ENCODE measurements at regions of chr3 and their contacts with region 1.

Region 1: GRCh38 chr3:44198284-44199269 is 43.1 kb upstream of the TOPAZ1 start:
- DNase-seq: peak; percentile 29
- ATAC-seq: peak; percentile 71
- H3K4me3 Mint-ChIP-seq: no peak overlapping the region
- H3K27ac Mint-ChIP-seq: no peak overlapping the region
- H3K4me1 Mint-ChIP-seq: no peaks in the 10 kb centered on the region
- H3K27me3 Mint-ChIP-seq: peaks cover 10% of the 10 kb centered on the region
- CTCF ChIP-seq: peak; percentile 67

Region 2: DNA sequence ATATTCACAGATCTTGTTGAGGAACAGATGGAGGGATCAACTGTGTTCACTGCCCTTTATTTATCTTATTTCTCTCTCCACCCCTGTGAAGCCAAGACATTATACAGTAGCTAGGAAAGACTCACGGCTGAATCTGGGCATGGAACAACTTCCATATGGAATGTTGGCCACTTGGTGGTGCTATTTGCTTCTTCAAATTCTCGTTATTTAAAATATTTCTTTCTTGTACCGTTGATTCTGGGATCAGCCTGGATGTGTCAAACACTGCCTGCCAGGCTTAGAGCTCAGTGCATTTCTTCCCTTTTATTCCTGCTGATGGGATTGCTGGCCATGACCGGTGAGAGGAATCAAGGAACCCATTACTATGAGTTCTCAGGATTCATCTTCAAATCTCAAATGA is 1236.9 kb before region 1 on chr3:
- CTCF ChIA-PET with region 1: interaction called, 5 read pairs
- POLR2A ChIA-PET with region 1: no interaction called
- intact Hi-C with region 1: loop called (anchors 5 kb)
- DNase-seq: no peak
- ATAC-seq: no peak
- H3K4me3 Mint-ChIP-seq: no peak overlapping the region
- H3K27ac Mint-ChIP-seq: no peak overlapping the region
- H3K4me1 Mint-ChIP-seq: no peaks in the 10 kb centered on the region
- H3K27me3 Mint-ChIP-seq: peaks cover 15% of the 10 kb centered on the region
- CTCF ChIP-seq: no peak

Region 3: GRCh38 chr3:43540624-43541023 is 658.0 kb before region 1 on chr3:
- CTCF ChIA-PET with region 1: interaction called, 8 read pairs
- POLR2A ChIA-PET with region 1: no interaction called
- intact Hi-C with region 1: loop called (anchors 1 kb)
- DNase-seq: no peak
- ATAC-seq: no peak
- H3K4me3 Mint-ChIP-seq: no peak overlapping the region
- H3K27ac Mint-ChIP-seq: no peak overlapping the region
- H3K4me1 Mint-ChIP-seq: no peaks in the 10 kb centered on the region
- H3K27me3 Mint-ChIP-seq: no peaks in the 10 kb centered on the region
- CTCF ChIP-seq: no peak

Region 4: DNA sequence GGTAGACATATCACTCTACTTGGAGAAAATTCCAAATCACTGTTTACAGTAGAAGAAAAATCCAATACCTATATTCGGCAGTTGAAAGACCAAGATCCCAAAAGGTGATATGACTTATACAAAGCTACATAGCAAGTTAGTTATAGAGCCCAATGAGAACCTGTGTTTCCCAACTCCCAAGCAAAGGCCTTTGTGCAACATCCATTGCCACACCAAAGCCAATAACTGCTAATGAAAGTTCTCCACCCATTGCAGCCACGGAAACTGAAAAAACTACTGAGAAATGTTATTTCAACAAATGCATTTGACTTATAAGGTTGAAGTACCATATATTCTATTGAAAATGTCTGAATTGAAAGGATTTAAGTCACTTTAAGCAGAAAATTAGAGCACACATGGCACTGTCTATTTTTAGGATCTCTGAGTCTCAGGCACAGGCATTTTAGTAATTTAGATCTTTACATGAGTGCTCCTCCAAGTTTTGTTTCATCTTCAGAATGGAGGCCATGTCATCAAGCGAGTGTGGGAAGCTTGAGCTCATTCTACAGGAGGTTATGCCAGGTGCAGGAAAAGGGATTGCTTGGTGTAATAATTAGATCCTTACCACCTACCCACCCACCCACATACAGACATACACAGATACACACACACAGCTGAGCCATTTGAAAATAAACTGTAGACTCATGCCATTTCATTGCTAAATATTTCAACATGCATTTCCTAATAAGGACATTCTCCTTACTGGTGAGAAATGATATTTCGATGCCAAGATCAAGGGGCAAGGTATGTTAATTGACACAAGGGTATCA is 557.1 kb before region 1 on chr3:
- CTCF ChIA-PET with region 1: no interaction called
- POLR2A ChIA-PET with region 1: no interaction called
- intact Hi-C with region 1: no loop called
- DNase-seq: no peak
- ATAC-seq: no peak
- H3K4me3 Mint-ChIP-seq: no peak overlapping the region
- H3K27ac Mint-ChIP-seq: no peak overlapping the region
- H3K4me1 Mint-ChIP-seq: no peaks in the 10 kb centered on the region
- H3K27me3 Mint-ChIP-seq: peaks cover 17% of the 10 kb centered on the region
- CTCF ChIP-seq: no peak

Region 5: GRCh38 chr3:43769471-43770425 is 428.8 kb before region 1 on chr3:
- CTCF ChIA-PET with region 1: interaction called, 25 read pairs
- POLR2A ChIA-PET with region 1: no interaction called
- intact Hi-C with region 1: loop called (anchors 1 kb)
- DNase-seq: peak; percentile 63
- ATAC-seq: peak; percentile 54
- H3K4me3 Mint-ChIP-seq: no peak overlapping the region
- H3K27ac Mint-ChIP-seq: no peak overlapping the region
- H3K4me1 Mint-ChIP-seq: peaks cover 4% of the 10 kb centered on the region
- H3K27me3 Mint-ChIP-seq: peaks cover 19% of the 10 kb centered on the region
- CTCF ChIP-seq: no peak

Region 6: DNA sequence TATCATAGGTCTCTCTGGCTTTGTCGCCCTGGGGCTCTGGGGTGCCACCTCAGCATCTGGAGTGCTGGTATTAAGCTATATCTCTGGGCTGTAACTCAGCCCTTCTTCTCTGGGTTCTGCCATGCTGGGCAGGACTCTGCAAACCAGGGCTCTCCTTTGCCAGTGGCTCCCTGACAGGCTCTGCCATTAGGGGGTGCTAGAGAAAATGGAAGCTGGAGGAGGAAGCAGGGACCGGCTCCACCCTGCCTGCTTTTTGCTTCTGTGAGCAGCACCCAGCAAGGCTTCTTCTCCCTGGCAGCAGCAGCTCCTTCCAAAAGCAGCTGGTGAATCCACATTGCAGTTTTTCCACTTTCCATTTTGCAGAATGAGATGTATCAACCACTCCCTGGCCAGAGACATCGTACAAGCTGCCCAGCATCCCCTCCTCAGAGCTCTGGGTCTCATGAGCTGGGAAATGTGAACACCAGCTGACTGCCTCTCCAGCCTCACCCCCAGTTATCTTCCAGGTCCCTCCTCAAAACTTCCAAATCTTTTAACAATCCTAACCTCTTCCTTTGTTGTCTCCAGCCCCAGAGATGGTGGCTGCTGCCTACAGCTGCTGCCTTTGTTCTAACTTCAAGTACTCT is 342.8 kb before region 1 on chr3:
- CTCF ChIA-PET with region 1: interaction called, 27 read pairs
- POLR2A ChIA-PET with region 1: no interaction called
- intact Hi-C with region 1: loop called (anchors 1 kb)
- DNase-seq: no peak
- ATAC-seq: peak; percentile 71
- H3K4me3 Mint-ChIP-seq: no peak overlapping the region
- H3K27ac Mint-ChIP-seq: no peak overlapping the region
- H3K4me1 Mint-ChIP-seq: peaks cover 4% of the 10 kb centered on the region
- H3K27me3 Mint-ChIP-seq: peaks cover 63% of the 10 kb centered on the region
- CTCF ChIP-seq: no peak

Region 7: DNA sequence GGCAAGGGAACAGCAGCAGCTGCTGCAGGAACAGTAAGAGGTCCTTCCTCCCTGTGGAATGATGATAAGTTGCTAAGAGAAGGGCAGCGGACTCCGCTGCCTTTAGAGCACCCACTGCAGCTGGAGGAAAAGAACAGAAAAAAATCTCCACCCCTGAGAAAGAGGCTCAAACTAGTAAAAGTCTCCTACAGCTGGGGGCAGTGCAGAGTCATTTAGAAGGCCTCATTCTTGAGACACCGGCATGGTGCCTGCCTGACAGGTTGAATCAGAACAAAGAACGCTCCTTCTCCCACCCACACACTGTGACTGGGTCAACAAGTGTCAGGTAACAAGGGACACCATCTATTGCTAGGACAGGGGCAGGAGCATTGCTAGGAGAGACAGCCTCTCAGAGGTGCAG is 319.4 kb before region 1 on chr3:
- CTCF ChIA-PET with region 1: interaction called, 10 read pairs
- POLR2A ChIA-PET with region 1: no interaction called
- intact Hi-C with region 1: no loop called
- DNase-seq: no peak
- ATAC-seq: no peak
- H3K4me3 Mint-ChIP-seq: no peak overlapping the region
- H3K27ac Mint-ChIP-seq: no peak overlapping the region
- H3K4me1 Mint-ChIP-seq: no peaks in the 10 kb centered on the region
- H3K27me3 Mint-ChIP-seq: peaks cover 2% of the 10 kb centered on the region
- CTCF ChIP-seq: no peak

Region 8: DNA sequence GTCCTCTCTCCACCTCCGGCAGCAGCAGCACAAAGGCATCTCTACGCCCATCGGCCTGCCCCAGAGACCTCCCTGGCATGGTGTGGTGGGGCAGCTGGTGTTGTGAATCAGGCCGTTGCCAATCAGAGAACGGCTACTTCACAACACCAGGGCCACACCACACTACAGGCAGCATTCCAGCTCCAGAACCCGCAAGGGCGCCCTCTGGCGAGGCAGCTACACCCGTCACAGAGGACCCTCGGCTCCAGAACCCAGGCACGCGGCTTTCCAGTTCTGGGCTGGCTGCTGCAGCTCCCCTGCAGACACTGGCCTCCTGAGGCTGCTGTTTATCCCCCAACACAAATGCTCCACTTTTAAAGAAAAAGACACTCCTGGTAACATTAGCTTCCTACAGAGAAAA is 84.4 kb before region 1 on chr3:
- CTCF ChIA-PET with region 1: no interaction called
- POLR2A ChIA-PET with region 1: no interaction called
- intact Hi-C with region 1: loop called (anchors 2 kb)
- DNase-seq: peak; percentile 43
- ATAC-seq: peak; percentile 72
- H3K4me3 Mint-ChIP-seq: no peak overlapping the region
- H3K27ac Mint-ChIP-seq: no peak overlapping the region
- H3K4me1 Mint-ChIP-seq: no peaks in the 10 kb centered on the region
- H3K27me3 Mint-ChIP-seq: peaks cover 7% of the 10 kb centered on the region
- CTCF ChIP-seq: no peak